ENCODE measurements at regions of chr14 and their contacts with region 1.

Region 1: DNA sequence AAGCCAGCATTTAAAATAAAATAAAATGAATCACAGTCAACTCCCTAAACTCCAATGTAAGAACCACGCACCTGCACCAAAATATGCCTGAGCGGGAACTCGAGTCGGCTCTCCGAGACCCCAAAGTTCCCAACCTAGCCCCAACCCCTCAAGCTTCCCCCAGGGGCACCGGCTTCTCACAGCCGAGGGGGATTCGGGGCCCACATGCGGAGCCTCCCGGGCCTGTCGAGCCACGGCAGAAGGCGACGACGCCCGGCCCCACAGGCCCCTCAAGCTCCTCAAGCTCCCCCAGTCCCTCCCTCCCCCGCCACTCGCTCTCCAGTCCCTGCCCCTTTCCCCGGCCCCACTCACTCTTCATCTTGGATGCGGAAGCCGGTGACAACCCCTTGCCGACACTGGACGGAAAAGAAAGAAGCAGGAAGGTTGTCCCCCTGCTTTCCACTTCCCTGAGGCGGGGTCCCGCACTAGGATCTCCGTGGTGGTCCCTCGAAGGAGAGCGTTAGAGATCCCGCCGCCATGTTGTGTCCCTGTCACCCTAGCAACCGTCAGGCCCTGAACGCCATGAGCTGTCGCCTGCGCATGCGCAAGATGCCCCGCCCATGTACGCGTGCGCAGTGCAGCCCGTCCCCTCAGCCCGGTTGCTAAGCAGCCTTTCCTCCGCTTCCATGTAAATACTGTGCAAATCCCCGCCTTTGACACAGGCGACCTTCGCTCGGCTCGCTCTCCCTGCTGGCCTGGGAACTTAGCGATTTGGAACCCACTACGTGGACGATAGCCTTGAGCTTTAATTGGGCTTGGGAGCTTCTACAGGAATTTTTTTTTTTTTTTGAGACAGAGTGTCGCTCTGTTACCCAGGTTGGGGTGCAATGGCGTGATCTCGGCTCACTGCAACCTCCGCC is at the start of gene MOK:
- DNase-seq: peak; percentile 97
- H3K4me3 ChIP-seq: peak within 1 kb of the TSS; percentile 60 to 81 (median 64)
- H3K27ac ChIP-seq: peak within 1 kb of the TSS; percentile 52 to 69 (median 64)
- H3K4me1 ChIP-seq: peaks cover 0 to 17% (median 5%) of the 10 kb centered on the region in 4 donors
- H3K27me3 ChIP-seq: no peaks in the 10 kb centered on the region
- CTCF ChIP-seq: no peak
- EP300 ChIP-seq: no peak
- POLR2A ChIP-seq: no peak
- total RNA-seq, gene MOK: 7.5 to 17.2 (median 11.2) TPM

Region 2: DNA sequence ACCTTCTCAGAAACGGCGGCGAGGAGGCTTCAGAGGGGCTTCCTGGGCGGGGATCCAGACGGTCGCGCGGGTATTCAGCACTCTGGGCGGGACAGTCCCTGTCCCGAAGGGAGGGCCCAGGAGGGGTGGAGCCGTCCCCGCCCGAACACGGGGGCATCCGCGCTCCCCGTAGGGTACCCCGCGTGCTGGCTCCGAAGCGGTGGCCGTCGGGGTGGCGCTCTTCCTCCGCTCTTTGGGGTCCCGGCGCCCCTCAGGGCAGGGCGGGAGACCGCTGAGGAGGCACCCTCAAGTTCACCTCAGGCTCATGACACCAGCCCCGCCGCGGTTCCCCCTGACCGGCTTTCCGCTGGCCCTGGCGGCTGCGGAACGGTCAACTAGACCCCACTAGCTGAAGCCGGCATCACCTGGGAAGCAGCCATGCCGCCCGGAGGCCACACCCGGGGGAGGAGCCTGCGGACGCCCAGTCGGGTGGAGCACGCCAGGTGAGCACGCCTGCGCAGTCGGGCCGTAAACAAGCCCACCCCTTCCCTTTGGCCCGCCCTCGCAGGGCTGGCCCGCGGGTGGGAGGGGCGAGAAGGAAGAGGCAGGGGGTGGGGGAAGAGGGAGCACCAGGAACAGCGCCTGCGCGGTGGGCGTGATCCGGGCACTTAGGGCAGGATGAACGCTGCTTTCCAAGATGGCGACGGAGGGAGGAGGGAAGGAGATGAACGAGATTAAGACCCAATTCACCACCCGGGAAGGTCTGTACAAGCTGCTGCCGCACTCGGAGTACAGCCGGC is 165.4 kb before region 1 on chr14 and contains the start of gene WDR20:
- intact Hi-C with region 1: loop called (anchors 2 kb)
- DNase-seq: peak; percentile 98
- H3K4me3 ChIP-seq: peak within 1 kb of the TSS; percentile 70 to 97 (median 96)
- H3K27ac ChIP-seq: peak within 1 kb of the TSS; percentile 77 to 86 (median 85)
- H3K4me1 ChIP-seq: peaks cover 0 to 31% (median 21%) of the 10 kb centered on the region in 4 donors
- H3K27me3 ChIP-seq: no peaks in the 10 kb centered on the region
- CTCF ChIP-seq: no peak
- EP300 ChIP-seq: peak in 1 of 4 donors; percentile 17
- POLR2A ChIP-seq: peak in 1 of 2 donors; percentile 40
- total RNA-seq, gene WDR20: 19.1 to 32.1 (median 27.3) TPM

Measured in sigmoid colon (tissue), 7 donors.